Transverse colon (tissue), 4 donors: ENCODE measurements at regions of chr5 and their contacts with region 1.

Region 1: GRCh38 chr5:2280290-2280689 is 397.6 kb upstream of the IRX4 start:
- DNase-seq: no peak
- H3K4me3 ChIP-seq: no peak overlapping the region
- H3K27ac ChIP-seq: no peak overlapping the region
- H3K4me1 ChIP-seq: no peaks in the 10 kb centered on the region
- H3K27me3 ChIP-seq: no peaks in the 10 kb centered on the region
- CTCF ChIP-seq: no peak
- EP300 ChIP-seq: no peak
- POLR2A ChIP-seq: no peak

Region 2: DNA sequence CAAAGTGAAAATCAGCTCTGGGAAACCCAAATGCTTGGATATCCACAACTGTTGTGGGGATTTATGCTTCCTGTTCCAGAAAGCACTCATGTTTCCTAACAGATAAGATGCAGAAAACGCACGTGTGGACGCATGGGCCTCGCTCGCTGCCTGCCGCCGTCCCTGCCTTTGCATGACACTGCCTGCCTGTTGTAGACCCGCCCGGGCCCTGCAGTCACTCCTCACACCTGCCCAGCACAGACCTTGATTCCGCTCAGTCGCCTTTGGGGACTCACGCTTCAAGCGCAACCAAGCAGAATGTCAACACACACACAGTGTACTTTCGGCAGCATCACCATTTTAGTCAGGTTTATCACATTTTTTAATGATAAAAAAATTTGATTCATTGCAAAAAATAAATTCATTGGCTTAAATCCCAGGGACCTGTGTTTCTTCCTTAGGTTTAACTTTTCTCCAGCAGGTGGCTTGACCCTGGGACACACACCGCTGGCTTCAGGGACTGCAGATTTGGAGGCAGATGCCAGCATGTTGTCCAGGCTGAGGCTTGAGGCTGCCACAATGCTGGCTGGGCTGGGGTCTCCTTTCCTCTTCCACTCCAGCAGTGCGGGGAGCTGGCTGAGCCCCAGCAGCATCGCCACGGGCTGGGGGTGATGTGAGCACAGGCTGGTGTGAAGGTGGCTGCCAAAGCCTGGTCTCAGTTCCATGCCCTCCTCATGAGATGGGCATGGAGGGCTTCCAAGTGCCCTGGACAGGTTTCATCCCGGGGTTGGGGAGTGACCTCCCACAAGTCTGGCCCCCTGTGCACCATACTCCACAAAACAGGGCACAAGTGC is 19.3 kb after region 1 on chr5:
- in situ Hi-C with region 1: no loop called
- intact Hi-C with region 1: loop called (anchors 1 kb)
- DNase-seq: no peak
- H3K4me3 ChIP-seq: no peak overlapping the region
- H3K27ac ChIP-seq: no peak overlapping the region
- H3K4me1 ChIP-seq: no peaks in the 10 kb centered on the region
- H3K27me3 ChIP-seq: no peaks in the 10 kb centered on the region
- CTCF ChIP-seq: no peak
- EP300 ChIP-seq: no peak
- POLR2A ChIP-seq: no peak